H1 (cell line): ENCODE measurements at regions of chr3 and their contacts with region 1.

Region 1: DNA sequence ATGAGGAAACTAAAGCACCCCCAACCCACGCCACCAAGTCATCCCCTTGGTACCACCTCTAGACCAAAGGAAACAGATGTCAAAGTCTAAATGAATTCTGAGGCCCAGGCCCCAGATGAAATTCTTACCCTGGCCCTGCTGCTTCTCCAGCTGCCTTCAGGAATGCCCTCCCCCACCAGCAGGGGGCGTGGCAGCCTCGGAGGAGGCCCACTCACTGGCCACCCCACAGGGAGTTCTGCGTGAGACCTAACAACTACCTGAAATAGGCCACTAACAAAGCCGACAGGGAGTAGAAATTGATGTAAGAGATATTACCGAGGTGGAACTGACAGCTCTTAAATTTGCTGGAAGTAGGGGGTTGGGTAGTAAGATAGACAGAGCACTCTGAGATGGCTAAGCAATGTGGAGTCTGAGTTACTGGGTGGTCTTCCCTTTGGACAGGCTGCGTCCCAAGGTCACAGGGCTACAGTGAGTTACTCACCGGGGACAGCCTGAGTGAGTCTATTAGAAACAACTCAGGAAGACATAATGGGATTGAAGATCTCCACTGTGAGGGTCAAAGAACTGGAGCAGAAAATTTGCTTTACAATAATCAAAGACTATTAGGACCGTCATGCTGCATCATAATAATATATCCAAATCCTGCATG is 240.7 kb downstream of the SHOX2 start:
- DNase-seq: peak; percentile 29 to 93
- H3K4me3 ChIP-seq: no peak overlapping the region
- H3K27ac ChIP-seq: no peak overlapping the region
- H3K4me1 ChIP-seq: no peaks in the 10 kb centered on the region; a peak in 1 of 7 replicates
- H3K27me3 ChIP-seq: no peaks in the 10 kb centered on the region
- CTCF ChIP-seq: peak; percentile 88 to 93 (median 89)
- EP300 ChIP-seq: no peak
- POLR2A ChIP-seq: no peak
- RAD21 ChIP-seq: peak; percentile 93 to 94

Region 2: DNA sequence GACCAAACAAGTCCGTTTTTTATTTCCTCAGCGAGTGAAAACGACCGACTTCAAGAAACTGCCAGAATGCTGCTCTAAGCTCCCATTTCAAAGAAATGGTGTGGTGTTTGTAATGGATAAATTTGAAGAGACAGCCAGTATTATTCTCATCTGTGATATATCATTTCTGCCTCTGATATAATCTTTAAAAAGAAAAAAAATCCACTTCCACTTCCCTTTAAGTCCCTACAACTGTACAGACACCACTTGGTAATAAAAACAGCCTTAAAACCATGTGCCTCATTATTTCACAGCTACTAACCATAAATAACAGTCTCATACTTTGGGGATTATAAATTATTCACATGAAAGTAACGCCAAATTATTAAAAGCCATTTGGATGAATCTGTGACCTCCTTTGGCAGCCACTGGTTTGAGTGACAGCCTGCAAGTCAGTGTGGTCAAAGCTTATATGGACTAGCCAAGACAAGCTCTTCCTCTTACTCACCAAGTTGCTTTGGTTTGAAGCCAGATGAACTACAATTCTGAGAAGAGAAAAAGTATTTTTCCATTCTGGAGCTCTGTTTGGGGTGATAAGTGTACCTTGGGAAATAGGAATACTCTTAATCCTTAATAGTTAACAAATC is 72.8 kb after region 1 on chr3:
- CTCF ChIA-PET with region 1: no interaction called
- POLR2A ChIA-PET with region 1: no interaction called
- DNase-seq: no peak
- H3K4me3 ChIP-seq: no peak overlapping the region
- H3K27ac ChIP-seq: no peak overlapping the region
- H3K4me1 ChIP-seq: no peaks in the 10 kb centered on the region
- H3K27me3 ChIP-seq: no peaks in the 10 kb centered on the region
- CTCF ChIP-seq: no peak
- EP300 ChIP-seq: no peak
- POLR2A ChIP-seq: no peak
- RAD21 ChIP-seq: no peak

Region 3: DNA sequence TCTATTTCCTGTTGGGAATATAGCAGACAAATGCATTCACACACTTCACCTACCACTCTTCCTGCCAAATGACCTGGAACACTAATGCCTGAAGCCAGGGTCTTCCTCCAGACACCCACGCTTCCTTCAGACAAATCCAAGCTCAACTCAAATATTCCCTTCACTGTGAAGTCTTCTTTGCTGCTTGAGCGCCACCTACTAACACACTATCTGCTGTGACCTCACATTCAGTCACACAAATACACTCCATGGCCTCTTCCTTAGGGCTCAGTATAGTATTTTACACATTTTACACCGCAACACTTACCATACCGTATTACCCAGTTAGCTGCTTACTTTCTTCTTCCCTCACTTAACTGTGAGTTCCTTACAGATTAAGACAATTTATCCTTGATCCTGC is 91.4 kb after region 1 on chr3:
- CTCF ChIA-PET with region 1: interaction called, 22 read pairs
- POLR2A ChIA-PET with region 1: no interaction called
- DNase-seq: no peak
- H3K4me3 ChIP-seq: no peak overlapping the region
- H3K27ac ChIP-seq: no peak overlapping the region
- H3K4me1 ChIP-seq: peaks cover 0 to 4% (median 0%) of the 10 kb centered on the region in 4 experiments; a peak in 1 of 7 replicates
- H3K27me3 ChIP-seq: no peaks in the 10 kb centered on the region
- CTCF ChIP-seq: peak in 1 of 3 experiments; percentile 23; a peak in 1 of 4 replicates
- EP300 ChIP-seq: no peak
- POLR2A ChIP-seq: no peak
- RAD21 ChIP-seq: peak; percentile 28 to 30; a peak in 3 of 4 replicates

Region 4: DNA sequence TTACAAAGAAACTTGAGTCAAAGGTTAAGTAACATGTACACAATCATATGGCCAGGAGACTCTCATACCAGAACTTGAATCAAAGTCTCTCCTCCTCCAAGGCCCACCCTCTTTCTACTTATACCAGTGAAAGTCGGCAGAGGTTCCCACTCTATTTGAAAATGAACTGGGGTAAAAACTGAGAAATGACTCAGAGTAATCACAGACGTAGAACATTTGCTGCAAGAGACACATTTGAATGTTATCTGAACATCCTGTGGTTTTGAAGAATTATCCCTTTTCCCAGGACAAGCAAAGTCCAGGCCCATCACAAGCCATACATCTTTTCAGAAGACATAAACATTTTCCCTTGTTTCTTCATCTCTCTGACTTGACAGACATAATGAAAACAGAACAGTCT is 185.0 kb after region 1 on chr3:
- CTCF ChIA-PET with region 1: no interaction called
- POLR2A ChIA-PET with region 1: no interaction called
- DNase-seq: no peak
- H3K4me3 ChIP-seq: no peak overlapping the region
- H3K27ac ChIP-seq: no peak overlapping the region
- H3K4me1 ChIP-seq: no peaks in the 10 kb centered on the region
- H3K27me3 ChIP-seq: no peaks in the 10 kb centered on the region
- CTCF ChIP-seq: no peak
- EP300 ChIP-seq: no peak
- POLR2A ChIP-seq: no peak
- RAD21 ChIP-seq: no peak

Region 5: DNA sequence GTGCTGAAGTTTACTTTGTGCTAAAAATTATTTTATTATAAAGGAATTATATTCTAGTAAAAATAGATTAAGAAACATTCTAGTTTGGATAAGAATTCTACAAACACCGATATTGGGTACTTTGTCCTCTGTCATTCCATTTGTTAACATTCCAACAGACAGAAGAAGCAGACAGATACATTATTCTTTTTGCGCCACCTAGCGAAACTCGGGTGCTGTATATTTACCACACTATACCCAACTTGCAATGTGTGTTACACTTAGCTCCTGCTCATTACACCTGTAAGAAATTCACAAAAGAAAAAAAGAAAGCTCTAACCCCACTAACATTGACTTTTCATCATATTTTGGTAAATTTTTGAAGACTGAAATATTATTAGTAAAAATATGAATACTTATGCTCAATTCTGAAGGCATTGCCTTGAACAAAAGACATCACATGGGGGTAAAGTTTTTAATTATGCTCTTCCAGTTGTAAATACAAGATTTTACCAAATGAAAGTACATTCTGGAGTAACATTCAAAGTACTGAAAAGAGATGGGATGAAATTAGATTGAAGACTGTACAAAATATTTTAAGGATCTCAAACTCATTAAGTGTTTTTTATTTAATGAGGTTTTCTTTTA is 569.0 kb after region 1 on chr3:
- CTCF ChIA-PET with region 1: interaction called, 11 read pairs
- POLR2A ChIA-PET with region 1: no interaction called
- DNase-seq: peak; percentile 21 to 59
- H3K4me3 ChIP-seq: no peak overlapping the region
- H3K27ac ChIP-seq: no peak overlapping the region
- H3K4me1 ChIP-seq: no peaks in the 10 kb centered on the region
- H3K27me3 ChIP-seq: no peaks in the 10 kb centered on the region
- CTCF ChIP-seq: peak in 2 of 3 experiments; percentile 57 to 72; a peak in 3 of 4 replicates
- EP300 ChIP-seq: no peak
- POLR2A ChIP-seq: no peak
- RAD21 ChIP-seq: peak; percentile 81 to 86